ENCODE measurements at regions of chr22 and their contacts with region 1.

Region 1: DNA sequence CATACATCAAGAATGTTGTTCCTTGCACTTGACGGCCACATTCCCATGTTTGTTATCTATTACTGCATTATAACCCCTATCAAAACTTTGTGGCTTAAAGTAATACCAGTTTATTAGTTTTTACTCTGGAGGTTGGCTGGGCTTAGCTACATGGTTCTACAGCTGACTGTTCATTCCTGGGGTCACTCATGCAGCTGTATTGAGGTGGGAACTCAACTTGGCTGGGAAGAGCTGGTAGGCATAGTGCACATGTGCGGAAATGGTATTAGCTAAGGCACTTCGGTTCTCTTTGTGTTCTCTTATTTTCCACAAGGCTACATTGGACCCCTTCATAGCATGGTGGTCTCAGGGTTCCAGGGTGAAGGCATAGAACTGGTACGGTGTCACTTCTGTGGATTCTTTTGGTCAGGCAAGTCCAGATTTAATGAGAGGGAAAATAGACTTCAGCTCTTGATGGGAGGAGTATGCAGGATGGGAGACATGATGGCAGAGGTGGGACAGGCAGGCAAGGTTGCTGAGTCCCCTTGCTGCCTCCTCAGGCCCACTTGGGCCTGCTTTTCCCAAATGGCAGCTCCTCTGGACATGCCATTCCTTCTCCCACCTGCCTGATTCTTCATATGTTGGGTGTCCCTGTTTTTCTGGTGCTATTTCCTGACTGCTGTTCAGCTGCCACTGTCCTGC is 16.1 kb downstream of the YDJC start:
- DNase-seq: no peak
- ATAC-seq: no peak
- H3K4me3 ChIP-seq: no peak overlapping the region
- H3K27ac ChIP-seq: no peak overlapping the region
- H3K4me1 ChIP-seq: no peaks in the 10 kb centered on the region; the same call in 1 of the 2 replicates
- H3K27me3 ChIP-seq: no peaks in the 10 kb centered on the region
- CTCF ChIP-seq: no peak

Region 2: DNA sequence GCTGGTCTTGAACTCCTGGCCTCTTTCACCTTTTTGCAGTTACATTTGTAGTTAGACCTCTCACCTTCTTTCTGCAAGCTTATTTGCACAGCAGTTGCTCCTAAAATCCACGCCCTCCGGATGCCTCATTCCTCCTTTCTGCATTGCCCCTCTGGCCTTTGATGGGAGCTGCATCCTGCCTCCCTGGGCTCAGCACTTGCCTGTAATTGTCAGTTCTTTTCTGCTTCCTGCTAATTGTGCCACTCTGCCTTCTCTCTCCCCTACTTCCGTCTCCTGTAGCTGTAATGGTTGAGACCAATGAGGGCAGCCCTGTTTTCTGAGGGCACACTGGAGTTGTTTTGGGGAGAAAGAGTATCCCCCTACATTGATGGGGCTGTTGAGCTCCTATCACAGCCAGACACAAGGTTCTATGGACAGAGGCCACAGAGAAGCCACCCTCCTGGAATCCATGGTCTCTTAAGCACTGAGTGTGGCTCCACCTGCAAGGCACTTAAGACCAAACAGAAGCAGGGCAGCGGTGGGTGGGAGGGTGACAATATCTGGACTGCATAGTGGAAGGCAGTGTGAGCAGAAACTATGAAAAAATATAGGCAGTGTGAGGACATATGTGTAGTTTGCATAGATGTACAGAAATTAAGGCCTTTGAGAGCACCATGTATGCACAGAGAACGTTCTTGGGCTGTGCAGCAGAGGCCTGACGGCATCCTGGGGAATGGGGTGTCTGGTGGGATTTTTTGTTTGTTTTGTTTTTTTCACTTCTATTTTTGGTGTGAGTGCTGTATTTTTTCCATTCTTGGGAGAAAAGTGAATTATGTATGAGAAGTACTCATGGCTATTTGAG is 14.4 kb before region 1 on chr22:
- CTCF ChIA-PET with region 1: no interaction called
- POLR2A ChIA-PET with region 1: interaction called, 11 read pairs
- intact Hi-C with region 1: no loop called
- DNase-seq: no peak
- ATAC-seq: no peak
- H3K4me3 ChIP-seq: no peak overlapping the region
- H3K27ac ChIP-seq: no peak overlapping the region
- H3K4me1 ChIP-seq: no peaks in the 10 kb centered on the region
- H3K27me3 ChIP-seq: no peaks in the 10 kb centered on the region
- CTCF ChIP-seq: no peak

Region 3: GRCh38 chr22:21641417-21641788 is 27.7 kb after region 1 on chr22:
- CTCF ChIA-PET with region 1: no interaction called
- POLR2A ChIA-PET with region 1: no interaction called
- intact Hi-C with region 1: no loop called
- DNase-seq: peak; percentile 44
- ATAC-seq: peak; percentile 43
- H3K4me3 ChIP-seq: peak overlapping the region; percentile 88
- H3K27ac ChIP-seq: peak overlapping the region; percentile 67
- H3K4me1 ChIP-seq: peaks cover 15% of the 10 kb centered on the region
- H3K27me3 ChIP-seq: no peaks in the 10 kb centered on the region
- CTCF ChIP-seq: peak; percentile 54